Heart left ventricle (tissue), 16 donors: ENCODE measurements at regions of chr10 and their contacts with region 1.

Region 1: DNA sequence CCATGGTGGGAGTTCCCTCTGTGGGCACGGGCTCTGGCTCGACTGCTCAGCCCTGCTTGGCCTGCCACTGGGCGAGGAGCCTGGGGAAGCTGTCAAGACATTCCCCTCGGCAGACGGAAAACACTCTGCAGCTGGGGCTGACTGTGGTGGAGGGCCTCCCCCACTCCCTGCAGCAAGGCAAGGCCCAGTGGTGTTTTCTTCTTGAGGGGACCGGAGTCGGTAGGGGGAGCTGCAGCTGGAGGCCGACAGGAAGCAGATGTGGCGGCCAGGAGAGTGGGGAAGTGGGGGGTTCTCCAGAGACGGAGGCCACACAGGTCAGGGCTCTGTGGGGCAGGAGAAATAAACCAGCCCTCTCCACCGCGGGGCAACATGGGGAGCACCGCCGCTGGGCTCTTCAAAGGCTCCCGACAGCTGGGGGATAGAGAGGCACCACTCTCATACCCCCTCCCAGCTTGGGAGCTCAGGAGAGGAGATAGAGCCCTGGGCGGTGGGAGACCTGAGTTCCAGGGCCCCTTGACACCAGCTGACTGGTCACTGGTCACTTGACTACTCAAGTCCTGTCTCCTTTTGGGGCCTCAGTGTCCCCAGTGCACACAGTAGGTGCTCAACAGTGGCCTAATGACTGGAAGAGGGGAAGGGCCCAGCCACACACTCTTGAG is 43.4 kb downstream of the PPIF start:
- DNase-seq: peak in 4 of 5 donors; percentile 23 to 66 (median 32)
- ATAC-seq: peak in 1 of 4 donors; percentile 10
- H3K4me3 ChIP-seq: no peak overlapping the region
- H3K27ac ChIP-seq: peak overlapping the region in 4 of 12 donors; percentile 2 to 83 (median 28)
- H3K4me1 ChIP-seq: peaks cover 0 to 66% (median 29%) of the 10 kb centered on the region in 12 donors
- H3K27me3 ChIP-seq: no peaks in the 10 kb centered on the region
- CTCF ChIP-seq: peak in 4 of 12 donors; percentile 4 to 29 (median 11)
- POLR2A ChIP-seq: no peak

Region 2: DNA sequence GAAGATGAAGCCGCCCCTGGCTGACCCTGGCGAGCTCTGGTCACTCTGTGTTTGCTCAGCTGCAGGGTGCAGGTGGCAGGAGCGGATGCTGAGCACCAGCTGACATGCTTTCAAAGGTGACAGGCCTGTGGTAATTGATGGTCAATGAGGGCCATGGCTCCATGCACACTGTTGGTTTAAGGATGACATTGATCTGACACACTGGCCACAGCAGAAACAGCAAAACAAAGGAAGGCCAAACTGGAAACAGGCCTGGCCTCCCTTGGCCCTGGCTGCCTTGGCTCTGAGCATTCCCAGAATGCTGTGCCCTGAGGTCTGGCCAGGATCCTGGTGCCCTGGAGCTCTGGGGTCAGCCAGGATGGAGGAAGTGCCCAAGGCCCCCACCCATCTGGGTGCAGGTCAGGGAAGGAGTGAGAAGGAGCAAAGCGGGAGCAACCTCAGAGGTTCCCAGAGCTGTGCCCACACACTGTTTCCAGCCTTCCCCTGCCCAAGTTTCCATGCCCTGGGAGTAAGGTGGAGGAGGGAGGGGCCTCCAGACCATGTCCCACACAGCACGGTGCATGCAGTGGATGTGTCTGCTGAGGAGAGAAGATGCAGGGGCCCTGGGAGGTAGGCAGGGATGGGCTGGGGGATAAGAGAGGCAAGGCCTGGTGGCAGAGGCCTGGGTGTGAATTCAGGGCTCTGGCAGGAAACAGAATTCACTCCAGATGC is 1054.8 kb before region 1 on chr10:
- intact Hi-C with region 1: no loop called
- DNase-seq: peak in 3 of 5 donors; percentile 59 to 72 (median 60)
- ATAC-seq: peak; percentile 44 to 77 (median 64)
- H3K4me3 ChIP-seq: no peak overlapping the region
- H3K27ac ChIP-seq: peak overlapping the region in 9 of 12 donors; percentile 3 to 61 (median 46)
- H3K4me1 ChIP-seq: peaks cover 0 to 25% (median 8%) of the 10 kb centered on the region in 12 donors
- H3K27me3 ChIP-seq: no peaks in the 10 kb centered on the region
- CTCF ChIP-seq: no peak
- POLR2A ChIP-seq: no peak

Region 3: DNA sequence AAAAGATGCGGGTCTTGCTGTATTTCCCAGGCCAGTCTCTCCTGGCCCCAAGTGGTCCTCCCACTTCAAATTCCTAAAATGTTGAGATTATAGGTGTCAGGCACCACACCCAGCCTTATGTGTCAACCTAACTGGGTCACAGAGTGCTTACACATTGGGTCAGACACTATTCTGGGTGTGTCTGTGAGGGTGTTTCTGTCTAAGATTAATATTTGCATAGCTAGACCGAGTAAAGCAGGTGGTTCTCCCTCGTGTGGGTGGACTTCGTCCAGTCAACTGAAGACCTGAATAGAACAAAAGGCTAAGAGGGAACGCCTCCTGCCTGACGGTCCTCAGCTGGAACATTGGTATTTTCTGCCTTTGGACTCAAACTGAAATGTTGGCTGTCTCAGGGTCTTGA is 31.9 kb before region 1 on chr10:
- intact Hi-C with region 1: no loop called
- DNase-seq: peak in 1 of 5 donors; percentile 11
- ATAC-seq: peak in 3 of 4 donors; percentile 38 to 47 (median 39)
- H3K4me3 ChIP-seq: no peak overlapping the region
- H3K27ac ChIP-seq: no peak overlapping the region
- H3K4me1 ChIP-seq: peaks cover 0 to 24% (median 0%) of the 10 kb centered on the region in 12 donors
- H3K27me3 ChIP-seq: no peaks in the 10 kb centered on the region
- CTCF ChIP-seq: no peak
- POLR2A ChIP-seq: no peak

Region 4: DNA sequence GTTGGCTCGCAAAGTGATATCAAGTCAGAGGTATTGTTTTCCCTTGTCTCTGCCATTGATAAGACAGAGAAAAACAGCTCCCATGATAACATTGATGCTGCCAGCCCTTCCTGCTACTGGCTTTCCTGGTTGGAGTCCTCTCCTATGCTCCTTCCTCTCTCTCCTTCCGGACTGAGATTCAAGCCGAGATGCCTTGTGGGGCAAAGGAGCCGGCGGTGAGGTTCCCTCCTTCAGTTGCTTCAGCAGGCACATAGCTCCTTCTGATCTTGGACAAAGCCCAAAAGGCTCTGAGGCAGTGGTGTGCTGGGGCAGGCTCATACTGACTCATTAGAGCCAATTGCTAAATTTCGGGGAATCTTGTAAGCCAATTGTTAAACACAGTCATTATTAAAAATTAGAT is 63.6 kb after region 1 on chr10:
- intact Hi-C with region 1: loop called in 2 of 10 experiments (anchors 5 to 10 kb)
- DNase-seq: no peak
- ATAC-seq: peak in 2 of 4 donors; percentile 31 to 52
- H3K4me3 ChIP-seq: no peak overlapping the region
- H3K27ac ChIP-seq: no peak overlapping the region
- H3K4me1 ChIP-seq: no peaks in the 10 kb centered on the region
- H3K27me3 ChIP-seq: no peaks in the 10 kb centered on the region
- CTCF ChIP-seq: no peak
- POLR2A ChIP-seq: no peak